ENCODE measurements at regions of chr9 and their contacts with region 1.

Region 1: DNA sequence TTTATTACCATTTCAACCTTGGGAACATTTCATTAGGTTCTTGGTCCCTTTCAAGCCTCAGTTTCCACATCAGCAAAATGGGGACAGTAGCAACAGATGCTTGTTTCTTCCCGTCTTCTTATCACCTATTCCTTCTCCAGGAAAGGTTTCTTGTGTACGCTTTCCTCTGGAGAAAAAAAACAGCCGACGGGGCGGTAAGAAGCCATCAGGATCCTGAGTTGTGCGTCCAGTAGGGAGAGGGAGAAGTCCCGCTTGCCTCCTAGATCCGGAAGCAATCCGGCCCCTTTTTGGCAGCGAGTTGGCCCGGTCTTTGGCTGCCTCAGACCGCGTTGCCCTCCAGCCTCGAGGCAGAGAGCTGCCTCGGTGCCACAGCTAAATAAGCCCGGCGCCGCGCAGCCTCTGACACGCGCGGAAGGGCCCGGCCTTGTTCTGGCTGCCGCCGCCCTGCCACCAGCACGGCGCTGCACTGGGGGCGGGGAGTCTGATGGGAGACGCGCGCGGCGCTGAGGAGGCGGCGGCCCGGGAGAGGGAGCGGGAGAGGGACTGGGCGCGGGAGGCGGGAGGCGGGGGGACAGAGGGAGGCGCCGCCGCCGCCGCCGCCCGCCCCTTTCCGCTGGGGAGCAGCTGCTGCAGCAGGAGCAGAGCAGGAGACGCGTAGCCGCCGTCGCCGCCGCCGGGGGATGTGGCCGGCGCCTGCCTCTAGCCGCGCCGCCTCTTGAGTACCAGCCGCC is at the start of gene SLC44A1:
- DNase-seq: peak; percentile 88 to 95 (median 92)
- ATAC-seq: peak; percentile 92
- H3K4me3 ChIP-seq: peak within 1 kb of the TSS; percentile 89
- H3K4me3 Mint-ChIP-seq: peak within 1 kb of the TSS; percentile 90 to 97 (median 92)
- H3K27ac ChIP-seq: peak within 1 kb of the TSS; percentile 67
- H3K27ac Mint-ChIP-seq: peak within 1 kb of the TSS; percentile 84 to 97 (median 90)
- H3K4me1 ChIP-seq: peaks cover 10% of the 10 kb centered on the region in 2 donors
- H3K4me1 Mint-ChIP-seq: peaks cover 19 to 42% (median 29%) of the 10 kb centered on the region in 7 donors
- H3K27me3 ChIP-seq: no peaks in the 10 kb centered on the region
- H3K27me3 Mint-ChIP-seq: peaks cover 0 to 82% (median 0%) of the 10 kb centered on the region in 5 donors
- total RNA-seq, gene SLC44A1: 7.7 to 13.8 (median 11.1) TPM

Region 2: DNA sequence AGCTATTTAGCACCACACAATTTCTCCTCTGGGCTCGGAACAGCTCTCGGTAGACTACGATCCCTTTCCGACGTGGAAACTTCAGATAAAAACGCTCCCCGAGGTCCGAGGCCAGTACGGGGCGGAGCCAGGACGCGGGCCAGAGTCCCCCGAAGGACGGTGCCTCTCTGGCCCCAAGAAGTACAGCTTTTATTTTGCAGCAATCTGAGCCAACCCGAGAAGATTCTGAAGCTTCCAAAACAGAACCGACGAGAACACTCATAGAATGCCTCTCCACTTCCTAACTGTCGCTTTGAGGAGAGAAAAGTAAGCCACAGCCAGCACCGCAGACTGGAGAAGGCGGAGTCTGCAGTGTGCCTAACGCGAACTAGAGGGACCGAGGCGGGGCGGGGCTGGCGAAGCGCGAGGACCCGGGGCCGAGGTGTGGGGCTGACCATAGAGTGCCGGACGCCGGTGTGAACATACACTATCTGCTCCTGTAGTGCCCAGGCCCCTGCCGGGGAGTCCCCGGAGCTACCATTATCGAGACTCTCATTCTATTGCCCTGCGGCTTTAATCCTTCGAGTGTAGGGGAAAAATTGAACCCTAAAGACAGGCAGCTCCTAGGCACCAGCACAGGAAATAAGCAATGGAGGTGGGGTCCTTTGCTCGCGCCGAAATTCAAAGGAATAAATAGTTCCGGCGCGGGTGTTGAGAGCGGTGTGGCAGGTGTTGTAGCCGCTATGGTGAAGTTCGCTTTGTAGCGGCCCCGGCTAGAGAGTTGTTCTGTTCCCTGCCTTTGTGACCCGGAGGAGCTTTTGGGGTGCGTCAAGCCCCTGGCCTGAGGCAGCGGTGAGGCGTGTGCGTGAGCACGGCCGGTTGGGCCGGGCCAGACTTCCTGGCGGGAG is 1150.3 kb before region 1 on chr9 and contains the start of gene SMC2:
- CTCF ChIA-PET with region 1: no interaction called
- POLR2A ChIA-PET with region 1: no interaction called
- intact Hi-C with region 1: loop called (anchors 1 kb)
- DNase-seq: peak; percentile 89 to 97 (median 95)
- ATAC-seq: peak; percentile 98
- H3K4me3 ChIP-seq: peak within 1 kb of the TSS; percentile 87
- H3K4me3 Mint-ChIP-seq: peak within 1 kb of the TSS; percentile 95 to 100 (median 100)
- H3K27ac ChIP-seq: peak within 1 kb of the TSS; percentile 94
- H3K27ac Mint-ChIP-seq: peak within 1 kb of the TSS; percentile 94 to 100 (median 99)
- H3K4me1 ChIP-seq: peaks cover 11 to 17% of the 10 kb centered on the region in 2 donors
- H3K4me1 Mint-ChIP-seq: peaks cover 17 to 58% (median 49%) of the 10 kb centered on the region in 7 donors
- H3K27me3 ChIP-seq: no peaks in the 10 kb centered on the region
- H3K27me3 Mint-ChIP-seq: peaks cover 0 to 3% (median 0%) of the 10 kb centered on the region in 5 donors
- total RNA-seq, gene SMC2: 4.4 to 53.6 (median 11.3) TPM

Region 3: GRCh38 chr9:104863180-104863883 is 380.8 kb before region 1 on chr9:
- CTCF ChIA-PET with region 1: no interaction called
- POLR2A ChIA-PET with region 1: no interaction called
- intact Hi-C with region 1: loop called in 1 of 2 experiments (anchors 5 kb)
- DNase-seq: peak in 8 of 9 donors; percentile 25 to 69 (median 57)
- ATAC-seq: peak; percentile 80
- H3K4me3 ChIP-seq: no peak overlapping the region
- H3K4me3 Mint-ChIP-seq: no peak overlapping the region
- H3K27ac ChIP-seq: no peak overlapping the region
- H3K27ac Mint-ChIP-seq: peak overlapping the region in 2 of 9 donors; percentile 2 to 62
- H3K4me1 ChIP-seq: no peaks in the 10 kb centered on the region
- H3K4me1 Mint-ChIP-seq: peaks cover 0 to 18% (median 7%) of the 10 kb centered on the region in 7 donors
- H3K27me3 ChIP-seq: no peaks in the 10 kb centered on the region
- H3K27me3 Mint-ChIP-seq: no peaks in the 10 kb centered on the region

Region 4: DNA sequence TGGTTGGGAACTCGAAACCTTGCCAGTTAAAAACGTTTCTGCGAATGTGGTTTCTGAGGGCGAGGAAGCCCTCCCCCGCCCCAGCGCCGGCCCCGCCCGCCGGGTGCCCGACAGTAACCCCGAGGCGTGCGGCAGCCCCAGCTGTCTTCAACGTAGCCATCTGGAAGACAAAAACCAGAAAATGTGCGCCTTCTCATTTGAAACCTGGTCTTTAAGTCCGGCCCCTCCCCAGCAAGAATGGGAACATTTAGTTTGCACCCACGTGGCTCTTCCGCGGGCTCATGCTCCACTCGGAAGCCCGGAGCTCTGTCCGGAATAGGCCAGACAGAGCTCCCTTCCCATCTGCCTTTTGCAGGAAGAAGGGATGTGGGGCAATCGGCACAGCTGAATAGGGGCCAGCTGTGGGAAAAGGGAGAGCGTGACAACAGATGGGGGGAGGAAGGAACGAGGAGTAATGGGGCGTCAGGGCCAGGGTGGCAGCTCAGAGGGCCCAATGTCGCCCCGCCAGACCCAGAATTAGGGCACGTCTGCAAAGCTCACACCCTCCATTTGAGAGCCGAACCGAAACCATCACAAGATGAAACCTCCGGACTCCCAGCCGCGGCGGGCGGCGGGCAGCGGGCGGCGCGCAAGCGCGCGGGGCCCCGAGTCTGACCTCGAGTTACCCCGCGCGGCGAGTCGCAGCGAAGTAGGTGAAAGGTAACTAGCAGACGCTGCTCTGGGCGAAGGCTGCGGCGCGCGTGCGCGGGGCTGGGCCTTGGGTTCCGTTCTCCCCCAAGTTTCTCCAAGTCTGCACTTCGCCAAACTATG is 252.8 kb before region 1 on chr9:
- CTCF ChIA-PET with region 1: no interaction called
- POLR2A ChIA-PET with region 1: no interaction called
- intact Hi-C with region 1: loop called (anchors 1 to 2 kb)
- DNase-seq: peak; percentile 79 to 92 (median 86)
- ATAC-seq: peak; percentile 88
- H3K4me3 ChIP-seq: peak overlapping the region; percentile 80
- H3K4me3 Mint-ChIP-seq: peak overlapping the region; percentile 89 to 94 (median 92)
- H3K27ac ChIP-seq: peak overlapping the region; percentile 92
- H3K27ac Mint-ChIP-seq: peak overlapping the region; percentile 68 to 98 (median 92)
- H3K4me1 ChIP-seq: peaks cover 15 to 32% of the 10 kb centered on the region in 2 donors
- H3K4me1 Mint-ChIP-seq: peaks cover 26 to 45% (median 39%) of the 10 kb centered on the region in 7 donors
- H3K27me3 ChIP-seq: no peaks in the 10 kb centered on the region
- H3K27me3 Mint-ChIP-seq: peaks cover 0 to 63% (median 0%) of the 10 kb centered on the region in 5 donors

Region 5: DNA sequence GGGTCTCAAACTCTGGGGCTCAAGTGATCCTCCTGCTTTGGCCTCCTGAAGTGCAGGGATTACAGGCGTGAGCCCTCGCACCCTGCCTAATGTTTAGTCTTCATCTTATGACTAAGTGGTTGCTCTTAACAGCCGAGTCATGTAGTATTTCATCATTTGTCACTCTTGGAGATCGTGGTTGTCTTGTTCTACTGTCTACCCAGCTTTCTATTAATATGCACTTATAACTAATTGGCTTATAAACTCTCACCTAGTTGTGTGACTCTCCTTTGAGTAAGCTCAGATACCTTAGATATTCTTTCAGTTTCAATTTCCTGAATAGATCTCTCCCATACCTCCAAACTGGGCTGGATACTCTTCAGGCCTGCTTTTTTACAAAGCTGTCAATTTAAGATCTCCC is 20.2 kb after region 1 on chr9:
- CTCF ChIA-PET with region 1: no interaction called
- POLR2A ChIA-PET with region 1: no interaction called
- intact Hi-C with region 1: no loop called
- DNase-seq: no peak
- ATAC-seq: no peak
- H3K4me3 ChIP-seq: no peak overlapping the region
- H3K4me3 Mint-ChIP-seq: peak overlapping the region in 1 of 10 donors; percentile 29
- H3K27ac ChIP-seq: no peak overlapping the region
- H3K27ac Mint-ChIP-seq: peak overlapping the region in 2 of 9 donors; percentile 30 to 34
- H3K4me1 ChIP-seq: no peaks in the 10 kb centered on the region
- H3K4me1 Mint-ChIP-seq: peaks cover 8 to 21% (median 15%) of the 10 kb centered on the region in 7 donors
- H3K27me3 ChIP-seq: no peaks in the 10 kb centered on the region
- H3K27me3 Mint-ChIP-seq: no peaks in the 10 kb centered on the region

Region 6: GRCh38 chr9:105290398-105290797 is 46.2 kb after region 1 on chr9:
- CTCF ChIA-PET with region 1: no interaction called
- POLR2A ChIA-PET with region 1: no interaction called
- intact Hi-C with region 1: loop called in 1 of 2 experiments (anchors 5 kb)
- DNase-seq: no peak
- ATAC-seq: no peak
- H3K4me3 ChIP-seq: no peak overlapping the region
- H3K4me3 Mint-ChIP-seq: no peak overlapping the region
- H3K27ac ChIP-seq: no peak overlapping the region
- H3K27ac Mint-ChIP-seq: no peak overlapping the region
- H3K4me1 ChIP-seq: peaks cover 0 to 4% of the 10 kb centered on the region in 2 donors
- H3K4me1 Mint-ChIP-seq: peaks cover 8 to 32% (median 23%) of the 10 kb centered on the region in 7 donors
- H3K27me3 ChIP-seq: no peaks in the 10 kb centered on the region
- H3K27me3 Mint-ChIP-seq: peaks cover 0 to 3% (median 0%) of the 10 kb centered on the region in 5 donors

Region 7: DNA sequence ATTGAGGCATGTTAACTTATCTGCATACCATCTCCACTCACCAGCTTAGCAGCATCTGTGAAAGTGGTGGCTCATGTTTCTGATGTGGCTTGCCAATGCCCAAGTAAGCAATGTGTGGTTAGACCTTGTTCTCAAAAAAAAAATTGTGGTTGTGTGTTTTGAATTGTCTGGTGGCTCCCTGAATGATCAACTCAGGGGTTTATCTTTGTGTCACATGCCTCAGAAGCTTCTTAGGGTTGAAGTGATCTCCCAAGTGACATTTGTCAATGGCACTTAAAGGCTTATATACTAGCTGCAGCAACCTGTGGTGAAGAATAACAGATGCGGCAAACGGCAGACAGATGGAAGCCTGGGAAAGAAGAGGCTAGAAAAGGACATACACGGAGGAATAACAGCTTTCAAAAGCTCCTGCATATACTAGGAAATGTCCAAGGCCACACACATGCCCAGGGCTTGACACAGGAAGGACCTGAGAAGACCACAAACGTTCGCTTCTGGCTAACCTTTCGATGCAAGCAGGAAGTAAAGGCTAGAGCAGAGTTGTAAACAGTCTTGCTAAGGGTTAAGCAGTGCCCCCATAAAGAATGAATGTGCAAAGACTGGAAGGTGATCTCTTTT is 161.5 kb after region 1 on chr9:
- CTCF ChIA-PET with region 1: no interaction called
- POLR2A ChIA-PET with region 1: interaction called, 5 read pairs
- intact Hi-C with region 1: loop called (anchors 1 to 2 kb)
- DNase-seq: peak in 8 of 9 donors; percentile 61 to 92 (median 90)
- ATAC-seq: peak; percentile 94
- H3K4me3 ChIP-seq: peak overlapping the region; percentile 1
- H3K4me3 Mint-ChIP-seq: peak overlapping the region in 9 of 10 donors; percentile 63 to 84 (median 75)
- H3K27ac ChIP-seq: no peak overlapping the region
- H3K27ac Mint-ChIP-seq: peak overlapping the region in 8 of 9 donors; percentile 11 to 96 (median 90)
- H3K4me1 ChIP-seq: peaks cover 19 to 22% of the 10 kb centered on the region in 2 donors
- H3K4me1 Mint-ChIP-seq: peaks cover 20 to 42% (median 34%) of the 10 kb centered on the region in 7 donors
- H3K27me3 ChIP-seq: peaks cover 0 to 6% of the 10 kb centered on the region in 2 donors
- H3K27me3 Mint-ChIP-seq: peaks cover 34 to 82% (median 59%) of the 10 kb centered on the region in 5 donors

Region 8: DNA sequence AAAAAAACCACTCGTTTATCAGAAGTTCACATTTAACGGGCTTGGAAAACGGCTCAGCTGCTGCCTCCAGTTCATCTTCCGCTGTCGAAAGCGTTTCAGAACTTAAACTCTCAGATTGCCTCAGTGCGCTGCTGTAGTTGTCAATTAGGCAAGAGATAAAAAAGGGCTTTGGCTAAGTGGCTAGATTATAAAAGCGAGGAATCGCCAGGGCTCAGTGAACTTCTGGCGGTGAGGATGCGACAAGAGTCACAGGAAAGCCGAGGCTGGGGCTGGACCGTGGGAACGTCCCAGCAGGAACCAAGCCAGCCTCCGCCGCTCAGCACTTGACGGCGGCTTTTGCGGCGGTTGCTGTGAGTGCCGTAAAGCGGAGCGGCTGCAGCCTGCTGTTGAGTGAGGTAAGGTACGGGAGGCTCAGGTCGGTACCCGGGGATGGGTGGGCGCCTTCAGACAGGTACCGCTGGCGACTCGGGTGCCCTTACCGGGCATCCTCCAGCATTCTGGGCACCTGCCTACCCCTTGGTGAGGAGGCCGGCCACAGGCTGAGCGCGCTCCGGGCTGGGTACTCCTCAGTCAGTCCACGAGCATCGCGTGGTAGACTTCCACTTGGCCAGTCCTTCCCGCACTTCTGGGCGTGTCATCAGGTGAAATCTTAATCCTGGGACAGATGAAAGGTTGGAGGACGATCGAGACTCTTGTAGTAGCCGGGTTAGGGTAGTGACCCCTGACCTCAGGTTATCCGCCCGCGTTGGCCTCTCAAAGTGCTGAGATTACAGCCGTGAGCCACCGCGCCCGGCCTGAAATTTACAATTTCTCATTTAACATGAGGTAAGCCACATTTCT is 313.8 kb after region 1 on chr9 and contains the start of gene FKTN:
- CTCF ChIA-PET with region 1: no interaction called
- POLR2A ChIA-PET with region 1: no interaction called
- intact Hi-C with region 1: loop called (anchors 2 to 5 kb)
- DNase-seq: peak; percentile 58 to 85 (median 83)
- ATAC-seq: peak; percentile 98
- H3K4me3 ChIP-seq: peak within 1 kb of the TSS; percentile 95
- H3K4me3 Mint-ChIP-seq: peak within 1 kb of the TSS; percentile 90 to 96 (median 94)
- H3K27ac ChIP-seq: peak within 1 kb of the TSS; percentile 61
- H3K27ac Mint-ChIP-seq: peak within 1 kb of the TSS; percentile 66 to 92 (median 86)
- H3K4me1 ChIP-seq: peaks cover 0 to 6% of the 10 kb centered on the region in 2 donors
- H3K4me1 Mint-ChIP-seq: peaks cover 11 to 37% (median 20%) of the 10 kb centered on the region in 7 donors
- H3K27me3 ChIP-seq: no peaks in the 10 kb centered on the region
- H3K27me3 Mint-ChIP-seq: no peaks in the 10 kb centered on the region
- total RNA-seq, gene FKTN: 8.0 to 15.5 (median 10.8) TPM